ENCODE measurements at regions of chr6 and their contacts with region 1.

Region 1: GRCh38 chr6:111057074-111057752 is 30.1 kb upstream of the SLC16A10 start:
- DNase-seq: peak in 8 of 14 experiments; percentile 2 to 68 (median 20)
- ATAC-seq: peak; percentile 68
- H3K4me3 ChIP-seq: no peak overlapping the region
- H3K4me3 Mint-ChIP-seq: no peak overlapping the region
- H3K27ac ChIP-seq: no peak overlapping the region
- H3K27ac Mint-ChIP-seq: no peak overlapping the region
- H3K4me1 ChIP-seq: no peaks in the 10 kb centered on the region
- H3K4me1 Mint-ChIP-seq: no peaks in the 10 kb centered on the region
- H3K27me3 ChIP-seq: no peaks in the 10 kb centered on the region
- H3K27me3 Mint-ChIP-seq: no peaks in the 10 kb centered on the region
- CTCF ChIP-seq: peak; percentile 87

Region 2: GRCh38 chr6:111011360-111012142 is 45.7 kb before region 1 on chr6:
- CTCF ChIA-PET with region 1: interaction called, 3 read pairs
- POLR2A ChIA-PET with region 1: no interaction called
- intact Hi-C with region 1: loop called in 1 of 2 experiments (anchors 2 kb)
- DNase-seq: peak in 4 of 14 experiments; percentile 3 to 64 (median 57)
- ATAC-seq: peak; percentile 82
- H3K4me3 ChIP-seq: no peak overlapping the region
- H3K4me3 Mint-ChIP-seq: no peak overlapping the region
- H3K27ac ChIP-seq: no peak overlapping the region
- H3K27ac Mint-ChIP-seq: no peak overlapping the region
- H3K4me1 ChIP-seq: no peaks in the 10 kb centered on the region
- H3K4me1 Mint-ChIP-seq: peaks cover 5% of the 10 kb centered on the region
- H3K27me3 ChIP-seq: no peaks in the 10 kb centered on the region
- H3K27me3 Mint-ChIP-seq: no peaks in the 10 kb centered on the region
- CTCF ChIP-seq: peak; percentile 78

Region 3: DNA sequence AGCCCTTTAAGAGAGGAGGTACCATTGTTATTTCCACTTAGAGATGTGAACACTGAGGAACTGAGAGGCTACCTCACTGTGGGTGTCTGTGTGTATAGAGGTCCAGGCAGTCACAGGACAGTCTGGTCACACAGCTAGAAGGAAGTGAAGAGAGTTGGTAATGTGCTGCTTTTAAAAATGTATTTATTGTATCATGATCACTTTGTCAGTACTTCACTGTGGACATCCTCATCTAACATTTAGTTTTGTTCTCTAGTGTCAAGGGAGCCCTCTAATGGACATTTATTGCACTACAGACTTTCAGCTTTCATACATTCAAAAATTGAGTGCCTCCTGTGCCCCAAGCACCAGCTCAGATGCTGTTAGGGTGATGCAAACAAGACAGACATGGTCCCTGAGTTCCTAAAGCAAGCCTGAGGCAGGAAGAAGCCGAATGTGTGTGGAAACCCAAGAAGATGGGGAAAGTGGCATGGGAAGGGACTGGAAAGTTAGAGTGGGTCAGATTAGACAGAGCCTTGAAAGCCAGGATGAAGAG is 153.0 kb after region 1 on chr6:
- CTCF ChIA-PET with region 1: interaction called, 21 read pairs
- POLR2A ChIA-PET with region 1: interaction called, 6 read pairs
- intact Hi-C with region 1: loop called (anchors 1 kb)
- DNase-seq: peak in 5 of 14 experiments; percentile 9 to 76 (median 68)
- ATAC-seq: peak; percentile 83
- H3K4me3 ChIP-seq: no peak overlapping the region
- H3K4me3 Mint-ChIP-seq: no peak overlapping the region
- H3K27ac ChIP-seq: no peak overlapping the region
- H3K27ac Mint-ChIP-seq: no peak overlapping the region
- H3K4me1 ChIP-seq: no peaks in the 10 kb centered on the region
- H3K4me1 Mint-ChIP-seq: peaks cover 6% of the 10 kb centered on the region
- H3K27me3 ChIP-seq: no peaks in the 10 kb centered on the region
- H3K27me3 Mint-ChIP-seq: no peaks in the 10 kb centered on the region
- CTCF ChIP-seq: peak; percentile 82

Measured in CD4-positive, alpha-beta T cell (primary cell).